AG04450 (cell line): ENCODE measurements at regions of chr12 and their contacts with region 1.

Region 1: DNA sequence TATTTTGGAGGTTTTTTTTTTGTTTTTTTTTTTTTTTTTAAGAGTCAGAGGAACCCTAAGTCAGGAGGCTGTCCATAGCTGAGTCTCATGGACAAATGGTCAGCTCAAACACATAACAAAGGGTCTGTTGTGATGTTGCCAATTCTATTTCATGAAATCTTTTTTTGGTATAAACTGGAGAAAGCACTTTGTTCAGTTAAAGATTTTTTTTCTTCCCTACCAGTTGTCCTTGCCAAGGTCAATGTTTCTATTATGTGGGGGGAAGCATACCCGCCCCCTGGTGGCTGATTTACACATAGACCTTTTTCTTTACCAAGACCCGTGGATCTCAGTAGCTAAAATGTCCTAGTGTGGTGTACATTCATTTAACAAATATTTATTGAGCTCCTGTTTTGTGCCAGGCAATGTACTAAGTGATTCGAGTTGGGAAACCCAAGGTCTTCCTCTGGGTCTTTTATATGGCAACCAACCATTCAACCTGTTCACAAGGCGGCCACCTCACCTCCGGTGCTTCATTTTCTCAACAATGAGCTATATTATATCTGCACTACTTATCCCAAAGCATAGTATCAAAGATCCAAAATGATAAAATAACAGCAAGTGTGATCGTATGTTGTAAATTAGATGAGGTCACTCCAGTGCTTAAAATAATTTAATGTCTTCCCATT is 214.5 kb downstream of the PAH start:
- DNase-seq: peak; percentile 27
- H3K4me3 ChIP-seq: no peak overlapping the region
- H3K27ac ChIP-seq: no peak overlapping the region
- H3K27me3 ChIP-seq: no peaks in the 10 kb centered on the region
- CTCF ChIP-seq: peak; percentile 69

Region 2: GRCh38 chr12:102095675-102096263 is 606.8 kb before region 1 on chr12:
- CTCF ChIA-PET with region 1: interaction called, 26 read pairs
- POLR2A ChIA-PET with region 1: no interaction called
- DNase-seq: no peak
- H3K4me3 ChIP-seq: no peak overlapping the region
- H3K27ac ChIP-seq: no peak overlapping the region
- H3K27me3 ChIP-seq: no peaks in the 10 kb centered on the region
- CTCF ChIP-seq: peak; percentile 39

Region 3: DNA sequence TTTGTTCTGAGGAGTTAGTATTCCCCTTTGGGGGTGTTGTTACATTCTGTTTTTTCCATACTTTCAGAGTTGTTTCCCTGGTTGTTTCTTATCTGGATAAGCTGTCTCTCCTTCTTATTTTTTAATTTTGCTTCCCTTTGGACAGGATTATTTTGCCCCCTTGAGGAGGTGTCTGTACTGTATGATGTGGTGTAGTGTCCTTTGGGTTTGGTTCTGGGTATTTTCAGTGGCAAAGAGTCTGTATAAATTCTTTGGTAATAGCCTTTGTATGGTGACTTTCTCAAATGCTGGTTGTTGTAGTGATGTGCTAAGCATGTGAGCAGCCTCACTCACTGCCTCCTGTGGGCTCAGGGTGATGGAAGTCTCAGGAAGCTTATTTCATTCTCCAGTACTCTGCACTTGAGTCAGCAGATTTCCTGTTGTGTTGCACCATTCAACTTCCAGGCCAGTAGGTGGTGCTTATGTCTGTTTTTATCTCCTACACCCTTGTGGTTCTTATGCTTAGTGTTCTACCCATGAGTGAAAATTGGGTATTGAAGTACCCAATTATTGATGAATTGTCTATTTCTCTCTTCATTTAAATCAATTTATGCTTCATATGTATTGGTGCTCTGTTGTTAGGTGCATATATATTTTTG is 401.6 kb before region 1 on chr12:
- CTCF ChIA-PET with region 1: interaction called, 22 read pairs
- POLR2A ChIA-PET with region 1: no interaction called
- DNase-seq: no peak
- H3K4me3 ChIP-seq: no peak overlapping the region
- H3K27ac ChIP-seq: no peak overlapping the region
- H3K27me3 ChIP-seq: no peaks in the 10 kb centered on the region
- CTCF ChIP-seq: peak; percentile 62

Region 4: DNA sequence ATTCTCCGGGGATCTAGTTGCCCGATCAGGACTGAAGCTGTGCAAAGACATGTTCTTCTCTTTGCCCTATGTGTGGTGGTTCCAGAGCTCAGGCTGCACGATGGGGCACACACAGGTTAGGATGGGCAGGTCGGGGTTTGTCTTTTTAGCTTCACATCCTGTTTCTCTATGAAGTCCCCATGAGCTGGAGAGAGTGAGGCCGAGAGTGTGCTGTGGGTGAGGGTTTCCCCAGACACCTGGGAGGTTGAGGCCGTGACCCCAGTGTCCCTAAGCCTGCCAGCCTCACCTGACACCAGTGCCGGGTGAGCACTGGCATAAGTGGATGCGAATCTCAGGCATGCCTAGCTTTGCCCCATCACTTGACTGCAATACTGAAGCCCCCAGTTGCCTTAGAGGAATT is 189.3 kb before region 1 on chr12:
- CTCF ChIA-PET with region 1: interaction called, 25 read pairs
- POLR2A ChIA-PET with region 1: no interaction called
- DNase-seq: no peak
- H3K4me3 ChIP-seq: no peak overlapping the region
- H3K27ac ChIP-seq: no peak overlapping the region
- H3K27me3 ChIP-seq: no peaks in the 10 kb centered on the region
- CTCF ChIP-seq: no peak

Region 5: DNA sequence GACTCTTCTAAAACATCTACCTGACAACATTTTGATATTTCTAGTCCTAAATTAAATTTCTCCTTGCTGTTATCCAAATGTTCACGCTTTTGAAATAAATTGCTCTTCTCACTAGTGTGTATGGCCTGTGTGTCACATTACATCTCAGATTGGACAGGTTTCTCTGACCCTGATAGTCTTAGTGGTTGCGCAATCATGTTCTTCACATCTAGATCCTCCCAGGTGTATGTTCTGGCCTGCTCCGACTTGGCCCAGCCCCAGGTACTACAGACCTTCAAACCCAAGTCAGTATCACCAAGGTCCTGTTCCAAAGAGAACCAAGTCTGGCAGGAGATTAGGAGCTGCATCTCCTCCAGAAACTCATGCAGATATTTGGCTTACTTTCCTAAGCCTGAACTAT is 464.4 kb after region 1 on chr12:
- CTCF ChIA-PET with region 1: no interaction called
- POLR2A ChIA-PET with region 1: no interaction called
- DNase-seq: no peak
- H3K4me3 ChIP-seq: no peak overlapping the region
- H3K27ac ChIP-seq: no peak overlapping the region
- H3K27me3 ChIP-seq: no peaks in the 10 kb centered on the region
- CTCF ChIP-seq: no peak

Region 6: DNA sequence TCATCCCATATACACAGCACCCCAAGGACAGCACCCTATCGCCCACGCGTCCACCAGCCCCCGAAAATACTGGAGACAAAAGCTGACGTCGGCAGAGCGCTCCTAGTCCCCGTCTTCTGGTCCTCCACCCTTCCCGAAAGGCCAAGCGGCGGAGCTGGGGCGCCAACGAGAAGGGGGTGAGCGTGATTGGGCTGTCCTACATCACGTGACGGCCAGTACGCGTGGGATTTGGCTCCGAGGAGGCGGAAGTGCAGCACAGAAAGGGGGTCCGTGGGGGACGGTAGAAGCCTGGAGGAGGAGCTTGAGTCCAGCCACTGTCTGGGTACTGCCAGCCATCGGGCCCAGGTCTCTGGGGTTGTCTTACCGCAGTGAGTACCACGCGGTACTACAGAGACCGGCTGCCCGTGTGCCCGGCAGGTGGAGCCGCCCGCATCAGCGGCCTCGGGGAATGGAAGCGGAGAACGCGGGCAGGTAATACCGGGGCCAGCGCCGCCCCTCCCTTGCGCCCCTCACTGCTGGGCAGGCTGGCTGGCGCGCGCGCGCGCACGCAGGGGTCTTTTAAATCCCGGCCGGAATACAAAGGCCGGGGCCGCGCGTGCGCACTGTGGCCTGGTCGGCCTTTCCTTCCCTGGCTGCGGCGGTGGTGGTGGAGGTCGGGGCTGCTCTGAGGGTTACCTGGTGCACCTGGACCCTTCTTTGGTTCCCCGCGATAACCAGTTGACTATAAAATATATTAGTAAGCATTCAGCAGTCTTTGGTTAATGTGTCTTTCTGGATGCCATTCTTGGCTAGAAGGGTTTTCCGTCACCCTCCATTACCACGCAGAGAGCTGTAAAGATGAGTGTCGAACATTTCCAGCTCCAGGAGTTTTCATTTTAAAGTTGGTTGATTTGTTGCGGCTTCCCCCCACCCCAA is 1263.3 kb after region 1 on chr12 and contains the start of gene TDG:
- CTCF ChIA-PET with region 1: no interaction called
- POLR2A ChIA-PET with region 1: no interaction called
- DNase-seq: peak; percentile 97
- H3K4me3 ChIP-seq: peak within 1 kb of the TSS; percentile 95
- H3K27ac ChIP-seq: peak within 1 kb of the TSS; percentile 88
- H3K27me3 ChIP-seq: no peaks in the 10 kb centered on the region
- CTCF ChIP-seq: peak; percentile 15; the same call in 1 of the 2 replicates
- polyA plus RNA-seq, gene TDG: 20.4 and 28.4 TPM in 2 replicates